Heart right ventricle (tissue), 16 donors: ENCODE measurements at regions of chr13 and their contacts with region 1.

Region 1: DNA sequence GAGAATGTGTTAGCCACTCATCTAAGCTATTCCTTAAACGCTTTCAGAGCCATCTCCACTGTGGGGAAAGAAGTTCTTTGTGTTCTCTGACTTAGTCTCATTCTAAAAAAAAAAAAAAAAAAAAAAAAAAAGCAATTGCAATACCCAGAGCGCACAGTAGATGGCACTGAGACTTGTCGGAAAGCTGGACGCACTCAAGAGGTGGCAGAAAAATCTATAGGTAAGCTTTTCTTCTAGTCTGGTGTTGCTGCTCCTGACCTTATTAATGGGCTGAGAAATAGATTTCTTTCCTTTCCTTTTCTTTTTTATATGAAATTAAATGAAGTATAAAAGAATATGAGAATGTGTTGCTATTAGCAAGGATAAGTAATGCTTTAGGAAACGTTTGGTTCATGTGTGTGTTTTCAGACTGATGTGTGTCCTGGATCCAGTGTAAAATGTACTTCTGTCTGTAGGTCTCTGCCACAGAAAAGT is 4.7 kb upstream of the GJB2 start:
- DNase-seq: no peak
- ATAC-seq: peak in 4 of 8 donors; percentile 16 to 59 (median 42)
- H3K4me3 ChIP-seq: no peak overlapping the region
- H3K27ac ChIP-seq: no peak overlapping the region
- H3K4me1 ChIP-seq: peaks cover 3 to 20% (median 19%) of the 10 kb centered on the region in 9 donors
- H3K27me3 ChIP-seq: peaks cover 16 to 58% (median 48%) of the 10 kb centered on the region in 7 donors
- CTCF ChIP-seq: peak; percentile 52 to 77 (median 72)

Region 2: GRCh38 chr13:20043207-20043925 is 154.0 kb before region 1 on chr13:
- intact Hi-C with region 1: no loop called
- DNase-seq: no peak
- ATAC-seq: peak in 6 of 8 donors; percentile 24 to 61 (median 42)
- H3K4me3 ChIP-seq: no peak overlapping the region
- H3K27ac ChIP-seq: no peak overlapping the region
- H3K4me1 ChIP-seq: peaks cover 0 to 13% (median 3%) of the 10 kb centered on the region in 9 donors
- H3K27me3 ChIP-seq: no peaks in the 10 kb centered on the region
- CTCF ChIP-seq: no peak

Region 3: DNA sequence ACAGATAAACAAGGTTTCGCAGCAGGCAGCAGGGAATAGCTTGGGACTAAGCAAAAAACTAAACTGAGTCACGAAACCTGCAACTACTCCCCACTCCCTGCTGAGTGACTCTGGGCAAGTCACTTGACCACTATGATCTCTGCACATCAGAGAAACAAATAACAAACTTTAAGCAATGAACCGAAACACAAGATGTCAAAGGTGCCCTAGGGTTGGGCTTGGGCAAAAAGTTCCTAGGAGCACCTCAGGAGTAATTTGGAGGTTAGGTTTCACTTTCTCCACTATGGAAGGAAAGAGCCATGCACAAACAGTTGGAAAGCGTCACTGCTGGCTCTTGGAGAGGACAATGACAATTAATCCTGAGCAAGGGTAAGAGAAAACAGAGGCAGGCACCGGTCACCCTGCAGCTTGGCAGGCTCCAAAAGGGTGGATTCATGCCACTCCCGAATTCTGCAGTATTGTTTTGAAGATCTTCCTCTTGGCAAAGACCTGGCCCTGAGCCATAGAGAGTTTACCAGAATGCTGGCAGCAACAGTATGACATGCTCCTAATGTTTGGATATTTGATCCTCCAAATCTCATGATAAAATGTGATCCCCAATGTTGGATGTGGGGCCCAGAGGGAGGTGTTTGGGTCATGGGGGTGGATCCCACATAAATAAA is 268.0 kb after region 1 on chr13:
- intact Hi-C with region 1: loop called in 1 of 10 experiments (anchors 5 kb)
- DNase-seq: no peak
- ATAC-seq: peak in 6 of 8 donors; percentile 42 to 60 (median 46)
- H3K4me3 ChIP-seq: peak overlapping the region in 2 of 10 donors; percentile 10
- H3K27ac ChIP-seq: peak overlapping the region in 9 of 10 donors; percentile 1 to 83 (median 65)
- H3K4me1 ChIP-seq: peaks cover 2 to 40% (median 25%) of the 10 kb centered on the region in 9 donors
- H3K27me3 ChIP-seq: no peaks in the 10 kb centered on the region
- CTCF ChIP-seq: no peak

Region 4: DNA sequence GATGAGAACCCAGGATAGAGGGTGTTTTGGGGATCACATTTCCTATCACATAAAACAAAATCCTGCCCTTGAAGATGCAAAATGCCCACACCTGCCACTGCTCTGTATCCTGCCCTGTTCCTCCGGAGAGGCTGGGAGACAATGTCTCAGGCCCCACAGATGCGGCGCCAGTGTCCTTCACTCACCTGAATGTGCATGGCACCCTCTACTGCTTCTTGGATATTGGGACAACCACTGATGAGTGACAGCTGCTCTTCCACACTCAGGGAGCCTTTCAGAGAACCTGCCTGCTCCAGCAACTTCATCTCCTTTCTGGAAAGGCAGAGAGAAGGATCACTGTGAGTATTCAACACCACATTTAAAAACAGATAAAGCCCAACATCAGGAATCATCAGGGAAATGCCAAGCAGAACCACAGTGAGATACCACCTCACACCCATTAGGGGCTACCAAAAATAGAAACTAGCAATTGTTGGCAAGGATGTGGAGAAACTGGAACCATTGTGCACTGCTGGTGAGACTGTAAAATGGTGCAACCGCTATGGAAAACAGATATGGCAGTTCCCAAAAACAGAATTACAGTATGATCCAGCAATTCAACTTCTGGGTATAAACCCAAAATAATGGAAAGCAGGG is 291.9 kb after region 1 on chr13:
- intact Hi-C with region 1: loop called in 9 of 10 experiments (anchors 1 to 10 kb)
- DNase-seq: no peak
- ATAC-seq: peak in 4 of 8 donors; percentile 64 to 89 (median 69)
- H3K4me3 ChIP-seq: no peak overlapping the region
- H3K27ac ChIP-seq: no peak overlapping the region
- H3K4me1 ChIP-seq: peaks cover 0 to 12% (median 0%) of the 10 kb centered on the region in 9 donors
- H3K27me3 ChIP-seq: no peaks in the 10 kb centered on the region
- CTCF ChIP-seq: peak in 7 of 9 donors; percentile 4 to 64 (median 46)

Region 5: GRCh38 chr13:20814224-20814910 is 617.0 kb after region 1 on chr13:
- intact Hi-C with region 1: loop called in 1 of 10 experiments (anchors 5 kb)
- DNase-seq: peak; percentile 82 to 83
- ATAC-seq: peak; percentile 92 to 98 (median 96)
- H3K4me3 ChIP-seq: peak overlapping the region in 1 of 10 donors; percentile 2
- H3K27ac ChIP-seq: peak overlapping the region in 9 of 10 donors; percentile 30 to 81 (median 75)
- H3K4me1 ChIP-seq: peaks cover 0 to 58% (median 36%) of the 10 kb centered on the region in 9 donors
- H3K27me3 ChIP-seq: no peaks in the 10 kb centered on the region
- CTCF ChIP-seq: no peak

Region 6: GRCh38 chr13:20924758-20925394 is 727.5 kb after region 1 on chr13:
- intact Hi-C with region 1: loop called in 2 of 10 experiments (anchors 10 kb)
- DNase-seq: peak; percentile 46 to 80
- ATAC-seq: peak in 3 of 8 donors; percentile 48 to 61 (median 58)
- H3K4me3 ChIP-seq: no peak overlapping the region
- H3K27ac ChIP-seq: no peak overlapping the region
- H3K4me1 ChIP-seq: no peaks in the 10 kb centered on the region
- H3K27me3 ChIP-seq: no peaks in the 10 kb centered on the region
- CTCF ChIP-seq: peak; percentile 40 to 90 (median 83)